ENCODE measurements at regions of chr20 and their contacts with region 1.

Region 1: DNA sequence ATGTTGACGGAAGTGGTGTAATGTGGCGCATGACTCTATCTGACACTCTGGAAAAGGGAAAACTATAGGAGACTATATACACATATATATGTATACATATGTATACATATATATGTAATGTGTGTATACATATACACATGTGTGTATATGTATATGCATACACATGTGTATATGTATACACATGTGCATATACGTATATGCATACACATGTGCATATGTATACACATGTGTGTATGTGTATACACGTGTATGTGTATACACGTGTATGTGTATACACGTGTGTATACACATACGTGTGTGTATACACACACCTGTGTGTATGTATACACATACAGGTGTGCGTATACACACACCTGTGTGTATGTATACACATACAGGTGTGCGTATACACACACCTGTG is 683.4 kb upstream of the FLRT3 start:
- DNase-seq: no peak
- ATAC-seq: no peak
- H3K4me3 ChIP-seq: no peak overlapping the region
- H3K4me3 Mint-ChIP-seq: no peak overlapping the region
- H3K27ac ChIP-seq: no peak overlapping the region
- H3K27ac Mint-ChIP-seq: no peak overlapping the region
- H3K4me1 ChIP-seq: no peaks in the 10 kb centered on the region
- H3K4me1 Mint-ChIP-seq: no peaks in the 10 kb centered on the region
- H3K27me3 ChIP-seq: no peaks in the 10 kb centered on the region
- H3K27me3 Mint-ChIP-seq: no peaks in the 10 kb centered on the region
- CTCF ChIP-seq: no peak

Region 2: GRCh38 chr20:15039103-15039752 is 18.4 kb after region 1 on chr20:
- CTCF ChIA-PET with region 1: no interaction called
- POLR2A ChIA-PET with region 1: no interaction called
- intact Hi-C with region 1: loop called (anchors 1 kb)
- DNase-seq: no peak
- ATAC-seq: no peak
- H3K4me3 ChIP-seq: no peak overlapping the region
- H3K4me3 Mint-ChIP-seq: no peak overlapping the region
- H3K27ac ChIP-seq: no peak overlapping the region
- H3K27ac Mint-ChIP-seq: no peak overlapping the region
- H3K4me1 ChIP-seq: no peaks in the 10 kb centered on the region
- H3K4me1 Mint-ChIP-seq: no peaks in the 10 kb centered on the region
- H3K27me3 ChIP-seq: no peaks in the 10 kb centered on the region
- H3K27me3 Mint-ChIP-seq: peaks cover 3% of the 10 kb centered on the region
- CTCF ChIP-seq: no peak